HepG2 (cell line): ENCODE measurements at regions of chr4 and their contacts with region 1.

Region 1: GRCh38 chr4:108683479-108683878 is 33.1 kb downstream of the OSTC start:
- DNase-seq: peak; percentile 15
- ATAC-seq: peak; percentile 61
- H3K4me3 ChIP-seq: no peak overlapping the region
- H3K27ac ChIP-seq: no peak overlapping the region
- H3K4me1 ChIP-seq: no peaks in the 10 kb centered on the region
- H3K27me3 ChIP-seq: no peaks in the 10 kb centered on the region
- CTCF ChIP-seq: peak; percentile 32
- EP300 ChIP-seq: no peak
- POLR2A ChIP-seq: no peak
- RAD21 ChIP-seq: no peak

Region 2: GRCh38 chr4:108762559-108763225 is 79.2 kb after region 1 on chr4 and contains the start of gene ETNPPL:
- CTCF ChIA-PET with region 1: no interaction called
- POLR2A ChIA-PET with region 1: no interaction called
- in situ Hi-C with region 1: no loop called
- intact Hi-C with region 1: loop called (anchors 5 kb)
- DNase-seq: peak; percentile 21
- ATAC-seq: peak; percentile 88
- H3K4me3 ChIP-seq: peak within 1 kb of the TSS; percentile 69 to 92 (median 82)
- H3K27ac ChIP-seq: peak within 1 kb of the TSS; percentile 72
- H3K4me1 ChIP-seq: peaks cover 37% of the 10 kb centered on the region
- H3K27me3 ChIP-seq: no peaks in the 10 kb centered on the region; a peak in 2 of 5 replicates
- CTCF ChIP-seq: peak; percentile 48
- EP300 ChIP-seq: no peak
- POLR2A ChIP-seq: peak in 1 of 2 experiments; percentile 77; a peak in 2 of 4 replicates
- RAD21 ChIP-seq: no peak
- total RNA-seq, gene ETNPPL: 6.0 and 10.2 TPM in 2 replicates

Region 3: GRCh38 chr4:108783665-108784463 is 100.4 kb after region 1 on chr4:
- CTCF ChIA-PET with region 1: interaction called, 4 read pairs
- POLR2A ChIA-PET with region 1: no interaction called
- in situ Hi-C with region 1: no loop called
- intact Hi-C with region 1: loop called (anchors 1 kb)
- DNase-seq: peak; percentile 12
- ATAC-seq: no peak
- H3K4me3 ChIP-seq: no peak overlapping the region
- H3K27ac ChIP-seq: no peak overlapping the region
- H3K4me1 ChIP-seq: no peaks in the 10 kb centered on the region
- H3K27me3 ChIP-seq: no peaks in the 10 kb centered on the region
- CTCF ChIP-seq: peak; percentile 48
- EP300 ChIP-seq: no peak
- POLR2A ChIP-seq: no peak
- RAD21 ChIP-seq: no peak

Region 4: DNA sequence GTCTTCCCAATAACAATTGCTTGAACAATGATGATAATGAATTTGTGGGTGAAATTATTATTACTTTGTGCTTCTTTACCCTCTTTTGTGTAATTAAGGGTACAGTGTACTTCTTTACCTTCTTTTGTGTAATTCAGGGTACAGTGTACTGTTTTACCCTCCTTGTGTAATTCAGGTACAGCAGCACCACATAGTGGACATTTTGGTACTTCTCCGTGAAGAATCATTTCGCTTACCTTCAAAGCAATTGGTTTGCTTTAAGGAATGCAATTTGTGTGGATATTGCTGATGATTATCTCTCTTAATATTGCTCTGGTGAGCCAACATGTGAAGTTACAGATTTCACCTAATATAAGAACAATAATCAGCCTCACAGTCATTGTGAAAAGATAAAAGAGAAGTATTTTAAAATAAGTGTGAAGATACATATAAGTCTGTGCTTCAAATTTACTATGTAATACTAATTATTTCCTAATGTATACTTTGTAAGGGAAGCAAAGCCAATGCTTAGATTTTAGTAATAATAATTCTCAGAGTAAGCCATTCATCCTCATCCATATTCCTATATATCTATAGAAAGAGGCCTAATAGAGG is 723.0 kb after region 1 on chr4:
- CTCF ChIA-PET with region 1: no interaction called
- POLR2A ChIA-PET with region 1: no interaction called
- in situ Hi-C with region 1: loop called (anchors 25 kb)
- intact Hi-C with region 1: loop called (anchors 1 kb)
- DNase-seq: peak; percentile 43
- ATAC-seq: peak; percentile 82
- H3K4me3 ChIP-seq: no peak overlapping the region
- H3K27ac ChIP-seq: no peak overlapping the region
- H3K4me1 ChIP-seq: no peaks in the 10 kb centered on the region
- H3K27me3 ChIP-seq: no peaks in the 10 kb centered on the region
- CTCF ChIP-seq: peak; percentile 80
- EP300 ChIP-seq: no peak
- POLR2A ChIP-seq: no peak
- RAD21 ChIP-seq: no peak